ENCODE measurements at regions of chr6 and their contacts with region 1.

Region 1: GRCh38 chr6:31815025-31815838 is at the starts of genes HSPA1A and HSPA1L:
- DNase-seq: peak; percentile 95
- H3K4me3 ChIP-seq: peak within 1 kb of the TSS; percentile 53 to 85 (median 75)
- H3K27ac ChIP-seq: peak within 1 kb of the TSS; percentile 81
- H3K4me1 ChIP-seq: peaks cover 15% of the 10 kb centered on the region
- H3K27me3 ChIP-seq: no peaks in the 10 kb centered on the region
- CTCF ChIP-seq: no peak
- total RNA-seq, gene HSPA1A: 67.8 to 99.5 TPM
- total RNA-seq, gene HSPA1L: 0.42 to 0.83 TPM

Region 2: DNA sequence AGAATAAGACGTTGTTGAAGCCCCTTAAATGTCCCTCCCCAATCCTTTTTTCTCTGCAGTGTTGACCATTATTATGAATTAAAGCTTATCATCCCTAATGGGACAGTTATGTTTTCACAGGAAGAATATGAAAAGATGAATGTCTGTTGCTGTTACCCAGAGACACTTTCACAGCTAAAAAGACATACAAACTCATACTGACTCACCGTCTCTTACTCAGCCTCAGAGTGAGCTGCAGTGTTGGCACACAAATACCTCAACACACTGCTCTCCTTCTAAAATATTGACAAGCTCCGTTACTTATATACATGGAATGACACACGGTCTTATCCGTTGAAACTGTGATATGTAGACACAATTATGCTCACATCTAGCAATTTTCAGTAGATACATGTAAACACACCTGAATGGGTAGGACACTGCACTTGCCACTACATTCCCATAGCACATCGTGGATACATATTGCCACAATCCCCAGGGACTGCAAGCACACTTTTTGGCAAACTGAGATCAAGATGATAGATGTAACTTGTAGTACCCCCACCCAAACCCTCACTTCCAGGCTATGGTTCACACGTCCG is 62.4 kb before region 1 on chr6:
- CTCF ChIA-PET with region 1: no interaction called
- dilution Hi-C with region 1: no loop called
- in situ Hi-C with region 1: no loop called
- intact Hi-C with region 1: no loop called
- DNase-seq: peak; percentile 52
- H3K4me3 ChIP-seq: no peak overlapping the region
- H3K27ac ChIP-seq: no peak overlapping the region
- H3K4me1 ChIP-seq: no peaks in the 10 kb centered on the region
- H3K27me3 ChIP-seq: no peaks in the 10 kb centered on the region
- CTCF ChIP-seq: no peak

Region 3: GRCh38 chr6:31795616-31796298 is 19.5 kb before region 1 on chr6 and contains the start of gene VARS1:
- CTCF ChIA-PET with region 1: interaction called, 3 read pairs
- dilution Hi-C with region 1: no loop called
- in situ Hi-C with region 1: no loop called
- intact Hi-C with region 1: loop called (anchors 2 kb)
- DNase-seq: peak; percentile 84
- H3K4me3 ChIP-seq: peak within 1 kb of the TSS; percentile 54 to 88 (median 82)
- H3K27ac ChIP-seq: peak within 1 kb of the TSS; percentile 87
- H3K4me1 ChIP-seq: peaks cover 33% of the 10 kb centered on the region
- H3K27me3 ChIP-seq: no peaks in the 10 kb centered on the region
- CTCF ChIP-seq: peak; percentile 47 to 87
- total RNA-seq, gene VARS1: 71.8 to 131 TPM

Region 4: GRCh38 chr6:31862344-31863227 is 47.4 kb after region 1 on chr6 and contains the start of gene NEU1:
- CTCF ChIA-PET with region 1: no interaction called
- dilution Hi-C with region 1: loop called (anchors 5 kb)
- in situ Hi-C with region 1: no loop called
- intact Hi-C with region 1: no loop called
- DNase-seq: peak; percentile 100
- H3K4me3 ChIP-seq: peak within 1 kb of the TSS; percentile 76 to 94 (median 86)
- H3K27ac ChIP-seq: peak within 1 kb of the TSS; percentile 50
- H3K4me1 ChIP-seq: peaks cover 10% of the 10 kb centered on the region
- H3K27me3 ChIP-seq: no peaks in the 10 kb centered on the region
- CTCF ChIP-seq: no peak
- total RNA-seq, gene NEU1: 27.8 to 42.5 TPM

Measured in mammary epithelial cell (primary cell).